Left cardiac atrium (tissue), 4 donors: ENCODE measurements at regions of chr13 and their contacts with region 1.

Region 1: DNA sequence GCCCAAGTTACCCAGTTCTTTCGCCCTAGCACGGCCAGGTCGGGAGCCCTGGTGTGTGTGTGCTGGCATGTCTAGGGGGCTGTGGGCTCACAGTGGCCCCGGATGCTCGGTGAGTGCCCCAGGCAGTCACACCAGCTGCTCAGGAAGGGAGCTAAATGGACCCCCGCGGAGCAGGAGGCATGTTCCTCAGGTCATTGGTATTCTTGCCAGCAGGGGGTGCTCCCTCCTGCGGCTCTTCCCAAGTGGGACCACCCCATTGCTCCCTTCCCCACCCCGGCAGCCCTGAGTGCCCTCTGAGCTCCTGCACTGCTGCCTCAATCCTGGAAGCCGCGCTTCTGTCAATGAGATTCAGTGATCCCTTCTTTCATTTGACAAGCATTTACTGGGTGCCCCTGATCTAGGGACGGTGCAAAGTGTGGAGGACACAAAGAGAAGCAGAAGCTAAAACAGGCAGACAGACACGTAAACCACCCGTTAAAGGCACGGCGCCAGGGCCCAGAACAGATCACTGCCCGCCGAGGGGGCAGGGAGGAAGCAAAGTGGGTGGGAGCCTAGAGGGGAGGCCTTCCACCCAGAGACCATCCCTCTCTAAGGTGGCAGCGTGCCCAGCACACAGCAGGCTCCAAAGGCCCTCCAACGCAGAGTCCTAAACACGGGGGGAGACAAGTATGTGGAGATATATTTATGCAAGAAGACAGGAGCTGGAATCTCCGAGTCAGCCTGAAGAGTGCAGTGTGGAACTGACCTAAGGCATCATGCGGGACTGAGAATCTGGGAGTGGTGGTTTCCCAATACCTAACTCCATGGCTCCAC is 5.2 kb upstream of the ADPRHL1 start:
- DNase-seq: no peak
- ATAC-seq: peak; percentile 55 to 62

Region 2: GRCh38 chr13:113495494-113496210 is 37.2 kb after region 1 on chr13:
- intact Hi-C with region 1: loop called in 1 of 2 experiments (anchors 5 kb)
- DNase-seq: no peak
- ATAC-seq: no peak

Region 3: DNA sequence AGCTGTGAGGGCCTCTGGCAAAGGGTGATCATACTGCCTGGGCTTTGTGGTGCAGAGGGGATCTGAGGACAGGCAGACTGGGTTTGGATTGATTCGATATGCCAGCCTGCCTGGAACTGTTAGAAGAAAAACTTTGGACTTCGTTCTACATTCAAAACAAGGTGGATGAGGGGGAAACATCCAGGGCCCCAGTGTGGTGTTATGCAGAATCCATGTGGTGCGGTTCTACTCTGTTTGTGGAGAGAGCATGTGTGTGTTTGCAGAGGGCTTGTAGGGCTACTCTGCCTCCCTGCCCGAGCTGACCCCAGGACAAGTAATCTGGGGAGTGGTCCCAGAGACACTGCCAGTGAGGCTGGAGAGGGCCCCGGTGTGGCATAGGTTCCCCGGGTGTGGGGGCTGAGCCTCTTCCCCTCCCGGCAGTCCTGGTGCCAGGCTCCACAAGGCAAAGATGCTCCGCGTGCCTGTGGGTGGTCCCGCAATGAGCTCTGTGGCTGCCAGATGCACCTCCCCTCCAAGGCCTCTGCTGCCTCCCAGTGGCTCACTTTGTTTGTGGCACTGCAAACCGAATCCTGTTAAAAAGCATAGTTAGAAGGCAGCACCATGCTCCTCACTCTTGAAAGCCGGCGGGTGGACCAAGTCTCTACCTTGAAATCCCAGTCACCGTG is 103.8 kb after region 1 on chr13:
- intact Hi-C with region 1: loop called (anchors 5 to 10 kb)
- DNase-seq: peak; percentile 60
- ATAC-seq: peak; percentile 69 to 84